ENCODE measurements at regions of chr3 and their contacts with region 1.

Region 1: GRCh38 chr3:74137790-74138189 is 476.7 kb downstream of the CNTN3 start:
- DNase-seq: no peak
- ATAC-seq: no peak
- H3K4me3 ChIP-seq: no peak overlapping the region
- H3K4me3 Mint-ChIP-seq: no peak overlapping the region
- H3K27ac ChIP-seq: no peak overlapping the region
- H3K27ac Mint-ChIP-seq: no peak overlapping the region
- H3K4me1 ChIP-seq: no peaks in the 10 kb centered on the region
- H3K4me1 Mint-ChIP-seq: no peaks in the 10 kb centered on the region
- H3K27me3 ChIP-seq: no peaks in the 10 kb centered on the region
- H3K27me3 Mint-ChIP-seq: no peaks in the 10 kb centered on the region

Region 2: GRCh38 chr3:74233091-74233490 is 95.3 kb after region 1 on chr3:
- CTCF ChIA-PET with region 1: no interaction called
- POLR2A ChIA-PET with region 1: no interaction called
- DNase-seq: no peak
- ATAC-seq: no peak
- H3K4me3 ChIP-seq: no peak overlapping the region
- H3K4me3 Mint-ChIP-seq: no peak overlapping the region
- H3K27ac ChIP-seq: no peak overlapping the region
- H3K27ac Mint-ChIP-seq: no peak overlapping the region
- H3K4me1 ChIP-seq: no peaks in the 10 kb centered on the region
- H3K4me1 Mint-ChIP-seq: no peaks in the 10 kb centered on the region
- H3K27me3 ChIP-seq: no peaks in the 10 kb centered on the region
- H3K27me3 Mint-ChIP-seq: no peaks in the 10 kb centered on the region

Region 3: GRCh38 chr3:74722211-74722610 is 584.4 kb after region 1 on chr3:
- CTCF ChIA-PET with region 1: interaction called in 1 of 2 experiments, 14 read pairs
- POLR2A ChIA-PET with region 1: no interaction called
- DNase-seq: no peak
- ATAC-seq: no peak
- H3K4me3 ChIP-seq: no peak overlapping the region
- H3K4me3 Mint-ChIP-seq: no peak overlapping the region
- H3K27ac ChIP-seq: no peak overlapping the region
- H3K27ac Mint-ChIP-seq: no peak overlapping the region
- H3K4me1 ChIP-seq: no peaks in the 10 kb centered on the region
- H3K4me1 Mint-ChIP-seq: no peaks in the 10 kb centered on the region
- H3K27me3 ChIP-seq: no peaks in the 10 kb centered on the region
- H3K27me3 Mint-ChIP-seq: no peaks in the 10 kb centered on the region